ENCODE measurements at regions of chr7 and their contacts with region 1.

Region 1: DNA sequence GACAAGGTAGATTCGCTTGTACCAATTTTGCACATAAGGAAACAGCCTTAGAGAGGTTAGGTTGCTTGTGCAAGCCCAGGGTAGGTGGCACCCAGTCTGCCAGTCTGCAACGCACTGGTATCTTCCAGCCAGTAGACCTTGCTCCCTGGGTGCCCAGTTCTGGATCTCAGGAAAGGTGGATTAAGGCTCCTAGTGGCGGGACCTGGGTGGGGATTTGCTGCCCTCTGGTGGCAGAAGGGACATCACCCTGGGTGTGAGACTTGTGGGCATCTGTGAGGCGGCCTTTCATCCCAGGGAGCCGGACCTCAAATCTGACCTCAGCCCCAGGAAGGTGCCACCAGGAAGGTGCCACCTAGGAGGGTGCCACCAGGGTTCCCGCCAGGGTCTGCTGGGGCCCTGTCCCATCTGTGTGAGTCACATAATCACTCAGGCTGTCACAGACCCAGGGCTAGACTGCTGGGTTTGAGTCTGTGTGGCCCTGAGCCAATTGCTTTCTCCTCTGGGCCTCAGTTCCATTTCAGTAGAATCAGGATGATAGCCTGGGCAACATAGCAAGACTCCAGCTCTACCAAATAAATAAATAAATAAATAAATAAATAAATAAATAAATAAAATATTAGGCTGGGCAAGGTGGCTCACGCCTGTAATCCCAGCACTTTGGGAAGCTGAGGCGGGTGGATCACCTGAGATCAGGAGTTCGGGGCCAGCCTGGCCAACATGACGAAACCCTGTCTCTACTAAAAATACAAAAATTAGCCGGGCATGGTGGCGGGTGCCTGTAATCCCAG is 5.3 kb upstream of the PRKRIP1 start:
- DNase-seq: peak; percentile 81
- H3K4me3 ChIP-seq: no peak overlapping the region
- H3K27ac ChIP-seq: no peak overlapping the region
- H3K4me1 ChIP-seq: peaks cover 6% of the 10 kb centered on the region
- H3K27me3 ChIP-seq: no peaks in the 10 kb centered on the region
- CTCF ChIP-seq: peak; percentile 89

Region 2: GRCh38 chr7:102279537-102280400 is 111.1 kb before region 1 on chr7:
- CTCF ChIA-PET with region 1: interaction called, 4 read pairs
- POLR2A ChIA-PET with region 1: no interaction called
- intact Hi-C with region 1: loop called (anchors 1 kb)
- DNase-seq: peak; percentile 85
- H3K4me3 ChIP-seq: no peak overlapping the region
- H3K27ac ChIP-seq: no peak overlapping the region
- H3K4me1 ChIP-seq: no peaks in the 10 kb centered on the region
- H3K27me3 ChIP-seq: no peaks in the 10 kb centered on the region
- CTCF ChIP-seq: peak; percentile 93